Activated CD4-positive, alpha-beta T cell treated with anti-CD3 and anti-CD28 coated beads, Interleukin-2, amount 10 ng/mL, durations not matched to agents 24 days and 14 days (primary cell): ENCODE measurements at regions of chrX and their contacts with region 1.

Region 1: DNA sequence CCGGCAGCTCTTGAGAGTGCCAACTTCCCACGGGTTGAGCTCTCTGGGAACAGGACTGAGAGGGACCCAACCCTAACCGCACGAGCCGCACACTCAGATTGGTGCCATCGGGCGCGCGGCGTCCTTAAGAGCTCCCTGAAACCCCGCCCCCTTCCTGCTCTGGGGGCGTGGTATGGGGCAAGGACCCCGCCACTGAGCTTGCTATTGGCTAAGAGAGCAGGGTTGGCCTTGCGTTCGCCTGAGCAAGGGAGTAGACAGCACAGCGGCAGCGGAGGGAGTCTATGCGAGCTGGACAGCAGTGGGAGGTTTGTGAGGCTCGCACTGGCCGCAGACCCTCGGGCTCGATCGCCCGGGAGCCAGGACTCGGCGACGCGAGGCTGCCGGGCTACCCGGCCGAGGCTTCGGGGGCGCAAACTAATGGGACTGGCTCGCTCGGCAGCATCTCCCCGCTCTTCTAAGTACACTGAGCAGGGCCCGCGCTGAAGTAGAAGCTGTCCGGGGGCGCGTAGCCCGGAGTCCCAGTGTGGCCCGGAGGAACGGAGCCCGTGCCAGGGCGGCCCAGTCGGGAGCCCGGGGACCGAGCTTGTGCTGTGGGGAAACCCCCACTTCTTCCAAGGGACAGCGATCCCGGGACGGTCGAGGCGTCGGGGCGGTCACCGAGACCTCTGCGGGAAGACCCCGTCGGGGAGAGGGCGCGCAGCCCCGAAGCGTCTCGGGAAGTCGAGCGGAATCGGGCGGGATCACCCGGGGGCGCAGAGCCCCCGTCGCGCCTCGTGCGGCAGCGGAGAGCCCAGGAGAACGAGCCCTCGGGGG is at the start of gene EFNB1:
- DNase-seq: peak; percentile 95
- H3K4me3 Mint-ChIP-seq: peak within 1 kb of the TSS; percentile 90
- H3K27ac Mint-ChIP-seq: peak within 1 kb of the TSS; percentile 71
- H3K4me1 Mint-ChIP-seq: peaks cover 14% of the 10 kb centered on the region
- H3K27me3 Mint-ChIP-seq: peaks cover 6% of the 10 kb centered on the region
- total RNA-seq, gene EFNB1: 6.3 and 7.1 TPM in 2 replicates

Region 2: DNA sequence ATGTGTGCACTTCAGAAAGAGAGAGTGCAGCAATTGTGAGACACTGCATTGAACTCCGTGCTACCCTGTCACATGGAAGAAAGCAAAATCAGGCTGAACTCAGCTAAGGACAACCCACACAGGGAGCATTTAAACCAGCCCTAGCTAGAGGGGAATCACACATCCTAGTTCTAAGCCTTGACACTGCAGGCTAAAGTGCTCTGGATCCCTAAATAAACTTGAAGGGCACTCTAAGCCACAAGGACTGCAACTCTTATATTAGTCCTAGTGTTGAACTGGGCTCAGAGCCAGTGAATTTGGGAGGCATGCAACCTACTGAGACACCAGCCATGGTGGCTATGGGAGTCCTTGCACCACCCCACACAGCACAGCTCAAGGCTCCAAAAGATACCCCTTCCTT is 707.6 kb before region 1 on chrX:
- intact Hi-C with region 1: no loop called
- DNase-seq: no peak
- H3K4me3 Mint-ChIP-seq: no peak overlapping the region
- H3K27ac Mint-ChIP-seq: no peak overlapping the region
- H3K4me1 Mint-ChIP-seq: no peaks in the 10 kb centered on the region
- H3K27me3 Mint-ChIP-seq: no peaks in the 10 kb centered on the region

Region 3: DNA sequence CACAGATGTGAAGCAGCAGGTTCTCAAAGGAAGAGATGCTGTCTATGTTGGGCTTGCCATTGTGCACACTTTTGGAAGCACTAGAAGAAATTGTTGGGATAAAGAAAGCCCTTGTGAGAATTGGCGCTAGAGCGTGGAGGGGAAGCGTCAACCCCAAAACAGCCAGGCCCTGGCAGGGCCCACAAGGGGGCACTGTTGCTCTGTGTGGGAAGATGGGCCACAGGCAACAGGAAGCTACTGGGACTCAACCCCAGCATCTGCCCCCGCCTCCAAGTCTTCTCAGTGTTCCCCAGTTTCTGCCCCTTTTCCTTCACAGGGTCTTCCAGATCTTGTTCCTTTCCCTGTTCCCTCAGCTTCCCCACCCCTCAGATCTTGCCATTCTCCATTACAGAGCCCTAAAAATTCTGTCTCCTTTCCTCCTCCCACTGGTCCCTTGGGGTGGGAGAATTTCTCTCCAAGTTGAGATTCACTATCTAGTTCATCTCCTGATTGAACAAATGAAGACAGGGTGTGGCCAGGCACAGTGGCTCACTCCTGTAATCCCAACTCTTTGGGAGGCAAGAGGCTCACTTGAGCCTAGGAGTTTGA is 95.9 kb before region 1 on chrX:
- intact Hi-C with region 1: loop called (anchors 5 kb)
- DNase-seq: peak; percentile 89
- H3K4me3 Mint-ChIP-seq: no peak overlapping the region
- H3K27ac Mint-ChIP-seq: no peak overlapping the region
- H3K4me1 Mint-ChIP-seq: peaks cover 2% of the 10 kb centered on the region
- H3K27me3 Mint-ChIP-seq: peaks cover 2% of the 10 kb centered on the region

Region 4: GRCh38 chrX:69165087-69165651 is 336.2 kb after region 1 on chrX and contains the start of gene PJA1:
- intact Hi-C with region 1: loop called (anchors 2 kb)
- DNase-seq: peak; percentile 89
- H3K4me3 Mint-ChIP-seq: peak within 1 kb of the TSS; percentile 84
- H3K27ac Mint-ChIP-seq: peak within 1 kb of the TSS; percentile 82
- H3K4me1 Mint-ChIP-seq: peaks cover 21% of the 10 kb centered on the region
- H3K27me3 Mint-ChIP-seq: peaks cover 7% of the 10 kb centered on the region
- total RNA-seq, gene PJA1: 14.4 and 15.5 TPM in 2 replicates

Region 5: GRCh38 chrX:69222103-69223090 is 393.5 kb after region 1 on chrX:
- intact Hi-C with region 1: loop called (anchors 1 kb)
- DNase-seq: peak; percentile 88
- H3K4me3 Mint-ChIP-seq: no peak overlapping the region
- H3K27ac Mint-ChIP-seq: no peak overlapping the region
- H3K4me1 Mint-ChIP-seq: no peaks in the 10 kb centered on the region
- H3K27me3 Mint-ChIP-seq: no peaks in the 10 kb centered on the region

Region 6: GRCh38 chrX:69285881-69286564 is 457.1 kb after region 1 on chrX:
- intact Hi-C with region 1: loop called (anchors 2 kb)
- DNase-seq: peak; percentile 84
- H3K4me3 Mint-ChIP-seq: peak overlapping the region; percentile 17
- H3K27ac Mint-ChIP-seq: no peak overlapping the region
- H3K4me1 Mint-ChIP-seq: no peaks in the 10 kb centered on the region
- H3K27me3 Mint-ChIP-seq: no peaks in the 10 kb centered on the region